Activated CD4-positive, alpha-beta T cell treated with anti-CD3 and anti-CD28 coated beads, Interleukin-2, amount 10 ng/mL, durations not matched to agents 24 days and 14 days (primary cell): ENCODE measurements at regions of chr3 and their contacts with region 1.

Region 1: DNA sequence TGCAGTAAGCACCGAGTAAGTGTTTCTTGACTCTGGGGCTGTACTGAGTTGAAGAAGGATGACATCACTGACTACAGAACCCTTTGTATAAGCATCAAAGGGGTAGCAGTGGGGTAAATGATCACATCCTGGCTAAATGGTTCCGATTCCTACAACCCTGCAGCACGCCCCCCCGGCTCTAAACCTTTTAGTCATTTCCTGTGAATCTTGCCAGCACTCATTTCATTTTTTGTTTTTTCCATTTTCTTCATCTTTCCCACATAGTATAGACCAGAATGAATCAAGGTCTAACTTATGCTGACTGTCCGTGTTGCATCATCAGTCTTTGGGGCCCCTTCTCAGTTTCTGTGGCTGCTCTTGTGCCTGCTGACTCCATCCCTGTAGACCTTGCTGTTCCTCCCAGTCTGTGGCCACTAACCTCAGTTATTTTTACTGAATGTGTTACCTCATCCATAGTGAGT is 383.1 kb upstream of the TPRG1 start:
- DNase-seq: peak; percentile 85
- H3K4me3 Mint-ChIP-seq: no peak overlapping the region
- H3K27ac Mint-ChIP-seq: no peak overlapping the region
- H3K4me1 Mint-ChIP-seq: peaks cover 2% of the 10 kb centered on the region
- H3K27me3 Mint-ChIP-seq: no peaks in the 10 kb centered on the region

Region 2: GRCh38 chr3:187738331-187739093 is 1050.1 kb before region 1 on chr3:
- intact Hi-C with region 1: loop called (anchors 1 kb)
- DNase-seq: peak; percentile 92
- H3K4me3 Mint-ChIP-seq: peak overlapping the region; percentile 98
- H3K27ac Mint-ChIP-seq: peak overlapping the region; percentile 99
- H3K4me1 Mint-ChIP-seq: peaks cover 51% of the 10 kb centered on the region
- H3K27me3 Mint-ChIP-seq: no peaks in the 10 kb centered on the region

Region 3: GRCh38 chr3:188257384-188258026 is 531.1 kb before region 1 on chr3:
- intact Hi-C with region 1: loop called (anchors 1 kb)
- DNase-seq: no peak
- H3K4me3 Mint-ChIP-seq: no peak overlapping the region
- H3K27ac Mint-ChIP-seq: peak overlapping the region; percentile 85
- H3K4me1 Mint-ChIP-seq: peaks cover 47% of the 10 kb centered on the region
- H3K27me3 Mint-ChIP-seq: no peaks in the 10 kb centered on the region

Region 4: DNA sequence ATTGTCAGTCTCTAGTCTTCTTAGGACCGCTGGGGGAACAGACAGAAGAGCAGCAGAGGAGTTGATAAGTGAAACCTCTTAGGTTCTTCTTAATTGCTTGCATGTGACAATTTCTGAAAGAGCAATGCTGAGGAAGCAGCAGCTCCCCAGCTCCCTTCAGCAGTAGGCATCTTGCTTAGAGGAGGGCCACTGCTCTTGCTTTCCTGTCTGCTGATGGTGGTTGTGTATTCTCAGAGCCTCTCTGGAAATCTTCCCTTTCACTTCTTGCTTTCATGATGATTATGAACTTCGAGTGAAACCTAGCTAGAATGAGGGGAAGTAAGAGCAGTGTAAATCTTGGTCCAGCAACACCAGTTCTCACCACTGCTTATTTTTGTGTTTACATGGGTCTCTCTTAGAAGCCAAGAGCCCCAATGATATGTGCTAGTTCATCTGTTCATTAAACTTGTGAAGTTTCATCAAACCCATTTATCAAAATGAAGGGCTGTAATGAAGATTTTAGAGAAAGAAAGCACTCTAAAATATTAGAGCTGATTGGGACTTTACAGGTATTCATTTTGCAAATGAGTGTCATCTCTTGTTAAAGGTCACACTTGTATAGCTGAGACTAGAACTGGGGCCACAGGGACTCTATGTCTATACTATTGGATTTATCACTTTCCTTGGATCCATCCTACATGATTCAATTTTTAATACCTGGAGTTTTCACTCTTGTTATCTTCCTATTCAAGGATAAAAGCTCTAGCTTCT is 388.0 kb before region 1 on chr3:
- intact Hi-C with region 1: loop called (anchors 1 kb)
- DNase-seq: peak; percentile 81
- H3K4me3 Mint-ChIP-seq: peak overlapping the region; percentile 18
- H3K27ac Mint-ChIP-seq: peak overlapping the region; percentile 68
- H3K4me1 Mint-ChIP-seq: peaks cover 62% of the 10 kb centered on the region
- H3K27me3 Mint-ChIP-seq: no peaks in the 10 kb centered on the region

Region 5: DNA sequence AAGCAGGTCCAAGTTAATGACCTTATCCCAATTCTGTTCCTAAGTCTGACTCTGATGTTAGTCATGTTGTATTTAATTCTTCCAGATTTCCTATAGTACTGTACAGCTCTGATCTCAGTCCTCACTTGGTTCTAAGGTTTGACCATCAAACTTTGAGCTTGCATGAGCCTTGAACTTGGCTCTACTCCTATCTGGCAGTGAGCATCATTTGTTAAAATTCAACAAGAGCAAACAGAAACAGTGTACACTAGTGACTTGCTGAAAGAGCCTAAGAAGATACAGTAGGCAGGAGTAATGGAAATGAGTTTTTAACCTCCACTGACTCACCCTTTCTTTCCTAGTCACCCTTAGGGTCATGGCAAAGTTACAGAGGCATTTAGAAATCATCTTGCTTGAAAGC is 68.0 kb before region 1 on chr3:
- intact Hi-C with region 1: loop called (anchors 2 kb)
- DNase-seq: no peak
- H3K4me3 Mint-ChIP-seq: no peak overlapping the region
- H3K27ac Mint-ChIP-seq: no peak overlapping the region
- H3K4me1 Mint-ChIP-seq: peaks cover 13% of the 10 kb centered on the region
- H3K27me3 Mint-ChIP-seq: peaks cover 4% of the 10 kb centered on the region

Region 6: DNA sequence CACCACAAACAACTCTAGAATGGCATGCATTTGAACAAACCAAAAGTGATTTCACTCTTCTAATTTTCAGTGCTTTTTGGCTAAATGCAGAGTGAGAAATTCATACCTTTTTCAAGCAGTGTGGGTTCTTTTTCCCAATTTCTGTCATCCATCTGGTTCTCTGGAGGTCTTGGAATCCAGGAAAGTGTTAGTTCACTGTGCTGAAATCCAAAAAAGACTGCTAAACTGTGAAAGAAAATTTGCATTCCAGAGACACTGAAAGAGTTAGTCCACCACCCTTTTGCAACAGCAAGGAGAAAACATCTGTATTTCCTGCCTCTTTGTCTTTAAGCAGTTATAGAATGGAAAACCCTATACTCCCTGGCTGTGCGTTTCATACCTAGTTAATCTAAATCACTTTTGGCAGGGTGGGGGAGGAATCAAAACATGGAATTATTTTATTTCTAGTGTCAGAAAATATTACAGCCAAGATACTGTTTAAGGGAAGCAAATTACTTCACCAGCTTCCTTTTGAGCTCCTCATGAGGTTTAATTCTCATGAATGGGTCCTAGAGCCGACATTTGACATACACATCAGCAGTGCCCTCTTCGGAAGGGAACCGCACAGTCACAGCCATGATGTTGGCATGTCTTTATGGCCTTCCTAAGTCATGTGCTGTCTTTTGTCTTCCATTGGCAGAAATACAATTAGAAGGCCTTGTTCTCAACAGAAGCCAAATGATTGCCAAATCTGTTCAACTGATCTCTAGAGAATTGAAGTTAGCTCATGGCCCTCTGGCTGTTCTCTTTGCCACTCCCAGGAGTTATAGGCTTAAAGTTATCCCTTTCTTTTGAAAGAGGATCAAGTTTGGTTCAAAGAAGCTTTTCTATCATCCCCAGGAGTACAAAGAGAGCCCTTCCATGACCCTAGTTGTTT is 65.5 kb after region 1 on chr3:
- intact Hi-C with region 1: no loop called
- DNase-seq: no peak
- H3K4me3 Mint-ChIP-seq: no peak overlapping the region
- H3K27ac Mint-ChIP-seq: no peak overlapping the region
- H3K4me1 Mint-ChIP-seq: peaks cover 2% of the 10 kb centered on the region
- H3K27me3 Mint-ChIP-seq: peaks cover 3% of the 10 kb centered on the region

Region 7: GRCh38 chr3:189041482-189042090 is 252.9 kb after region 1 on chr3:
- intact Hi-C with region 1: loop called (anchors 2 kb)
- DNase-seq: peak; percentile 94
- H3K4me3 Mint-ChIP-seq: peak overlapping the region; percentile 48
- H3K27ac Mint-ChIP-seq: peak overlapping the region; percentile 79
- H3K4me1 Mint-ChIP-seq: peaks cover 54% of the 10 kb centered on the region
- H3K27me3 Mint-ChIP-seq: no peaks in the 10 kb centered on the region